Pancreas (tissue), 10 donors: ENCODE measurements at regions of chr3 and their contacts with region 1.

Region 1: GRCh38 chr3:66038726-66039589 is at the start of gene MAGI1:
- DNase-seq: peak; percentile 91 to 96 (median 95)
- ATAC-seq: peak; percentile 77 to 89 (median 87)
- H3K4me3 ChIP-seq: peak within 1 kb of the TSS; percentile 32 to 85 (median 76)
- H3K27ac ChIP-seq: peak within 1 kb of the TSS; percentile 77 to 96 (median 92)
- H3K4me1 ChIP-seq: peaks cover 0 to 10% (median 0%) of the 10 kb centered on the region in 3 donors
- H3K27me3 ChIP-seq: no peaks in the 10 kb centered on the region
- CTCF ChIP-seq: no peak
- total RNA-seq, gene MAGI1: 22.1 to 45.1 (median 28.1) TPM

Region 2: DNA sequence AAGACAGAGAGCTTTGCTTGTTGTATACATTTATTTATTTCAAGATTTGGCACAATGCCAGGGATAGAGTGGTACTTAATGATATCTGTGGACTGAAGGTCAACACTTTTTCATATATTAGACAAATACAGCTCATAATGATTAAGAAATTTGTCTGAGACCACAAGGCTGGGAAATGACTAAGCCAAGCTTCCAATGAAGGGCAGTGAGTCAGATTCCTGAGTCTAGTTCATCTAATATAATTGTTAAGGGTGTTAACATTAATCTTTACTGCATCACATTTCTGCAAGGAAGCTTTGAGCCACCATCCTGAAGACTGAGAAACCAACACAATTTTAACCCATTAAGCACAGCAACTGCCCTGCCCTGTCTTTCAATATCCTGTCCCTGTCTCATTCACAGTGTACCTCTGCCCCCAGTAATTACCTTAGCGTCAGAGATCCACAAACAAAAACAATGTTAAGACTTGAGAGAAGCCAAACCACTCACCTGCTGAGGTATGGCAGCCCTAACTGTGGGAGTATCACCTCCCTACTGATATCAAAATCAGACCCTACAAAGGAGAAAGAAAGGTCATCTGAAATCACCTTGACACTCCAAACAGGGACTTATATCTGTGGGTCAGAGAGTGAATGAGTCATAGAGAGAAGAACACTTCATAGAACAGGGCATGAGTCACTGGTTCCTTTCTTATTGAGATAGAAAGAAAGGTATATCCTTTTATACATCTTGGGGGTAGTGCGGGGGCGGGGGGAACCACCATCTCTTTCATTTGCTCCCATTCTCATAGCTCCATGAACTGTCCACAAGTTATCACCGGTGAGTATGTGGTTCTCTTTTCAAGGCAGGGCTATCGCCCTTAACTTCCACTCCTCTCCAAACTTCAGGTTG is 74.9 kb before region 1 on chr3:
- intact Hi-C with region 1: loop called in 1 of 3 experiments (anchors 5 kb)
- DNase-seq: no peak
- ATAC-seq: peak; percentile 52 to 79 (median 58)
- H3K4me3 ChIP-seq: no peak overlapping the region
- H3K27ac ChIP-seq: peak overlapping the region in 2 of 4 donors; percentile 34 to 46
- H3K4me1 ChIP-seq: peaks cover 5 to 26% (median 16%) of the 10 kb centered on the region in 3 donors
- H3K27me3 ChIP-seq: no peaks in the 10 kb centered on the region
- CTCF ChIP-seq: no peak

Region 3: GRCh38 chr3:66107855-66108254 is 68.9 kb after region 1 on chr3:
- intact Hi-C with region 1: no loop called
- DNase-seq: no peak
- ATAC-seq: peak in 1 of 4 donors; percentile 12
- H3K4me3 ChIP-seq: no peak overlapping the region
- H3K27ac ChIP-seq: no peak overlapping the region
- H3K4me1 ChIP-seq: no peaks in the 10 kb centered on the region
- H3K27me3 ChIP-seq: no peaks in the 10 kb centered on the region
- CTCF ChIP-seq: no peak